Endothelial cell of umbilical vein (primary cell): ENCODE measurements at regions of chr10 and their contacts with region 1.

Region 1: GRCh38 chr10:6202684-6203330 is at the start of gene PFKFB3:
- DNase-seq: peak; percentile 93
- H3K4me3 ChIP-seq: peak within 1 kb of the TSS; percentile 73 to 87 (median 83)
- H3K27ac ChIP-seq: peak within 1 kb of the TSS; percentile 56
- H3K4me1 ChIP-seq: peaks cover 23% of the 10 kb centered on the region
- H3K27me3 ChIP-seq: no peaks in the 10 kb centered on the region
- CTCF ChIP-seq: peak; percentile 90 to 98
- POLR2A ChIP-seq: peak; percentile 98
- total RNA-seq, gene PFKFB3: 33.7 and 35.6 TPM in 2 replicates

Region 2: GRCh38 chr10:6014241-6014761 is 188.5 kb before region 1 on chr10:
- CTCF ChIA-PET with region 1: interaction called, 9 read pairs
- POLR2A ChIA-PET with region 1: no interaction called
- dilution Hi-C with region 1: no loop called
- intact Hi-C with region 1: loop called (anchors 5 kb)
- DNase-seq: peak; percentile 53
- H3K4me3 ChIP-seq: no peak overlapping the region
- H3K27ac ChIP-seq: no peak overlapping the region
- H3K4me1 ChIP-seq: no peaks in the 10 kb centered on the region
- H3K27me3 ChIP-seq: peaks cover 0 to 6% of the 10 kb centered on the region in 2 experiments
- CTCF ChIP-seq: peak; percentile 58 to 60
- POLR2A ChIP-seq: no peak

Region 3: GRCh38 chr10:6108603-6109443 is 94.0 kb before region 1 on chr10:
- CTCF ChIA-PET with region 1: interaction called, 6 read pairs
- POLR2A ChIA-PET with region 1: no interaction called
- dilution Hi-C with region 1: no loop called
- intact Hi-C with region 1: loop called (anchors 1 kb)
- DNase-seq: peak; percentile 61
- H3K4me3 ChIP-seq: no peak overlapping the region
- H3K27ac ChIP-seq: no peak overlapping the region
- H3K4me1 ChIP-seq: peaks cover under 1% of the 10 kb centered on the region
- H3K27me3 ChIP-seq: no peaks in the 10 kb centered on the region
- CTCF ChIP-seq: peak; percentile 45 to 53
- POLR2A ChIP-seq: no peak

Region 4: DNA sequence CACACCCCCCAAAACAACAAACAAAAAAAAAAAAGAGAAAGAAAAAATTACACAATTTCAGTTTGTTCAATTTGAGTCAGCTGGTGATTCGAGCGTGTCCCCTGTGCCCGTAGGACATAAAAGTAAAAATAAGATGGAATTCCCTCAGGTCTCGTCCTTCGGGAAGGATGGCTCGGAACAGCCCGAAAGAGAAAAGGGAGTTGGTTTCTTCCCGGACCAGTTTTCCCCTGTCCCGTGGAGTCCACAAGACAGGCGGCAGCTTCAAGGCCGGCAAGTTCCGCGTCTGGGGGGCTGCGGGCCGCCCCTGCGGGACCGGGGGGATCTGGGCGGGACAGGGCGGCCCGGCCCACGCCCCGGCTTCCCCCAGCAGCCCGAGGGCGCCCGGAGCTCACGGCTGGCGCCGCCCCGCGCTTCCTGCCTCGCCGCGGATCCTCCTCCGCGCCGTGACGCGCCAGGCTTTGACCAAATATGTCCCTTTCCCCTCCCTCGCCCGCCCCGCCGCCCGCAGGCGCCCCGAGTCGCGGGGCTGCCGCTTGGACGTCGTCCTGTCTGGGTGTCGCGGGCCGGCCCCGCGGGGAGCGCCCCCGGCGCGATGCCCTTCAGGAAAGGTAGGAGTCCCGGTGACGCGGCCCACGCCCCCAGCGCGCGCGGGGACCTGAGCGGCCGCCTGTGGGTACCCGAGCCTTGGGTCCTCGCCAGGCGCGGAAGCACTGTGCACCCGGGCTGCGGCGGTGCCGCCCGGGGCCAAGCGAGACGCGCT is 58.2 kb before region 1 on chr10:
- CTCF ChIA-PET with region 1: interaction called, 15 read pairs
- POLR2A ChIA-PET with region 1: interaction called, 11 read pairs
- dilution Hi-C with region 1: no loop called
- intact Hi-C with region 1: loop called (anchors 2 kb)
- DNase-seq: peak; percentile 84
- H3K4me3 ChIP-seq: peak overlapping the region; percentile 65 to 84 (median 81)
- H3K27ac ChIP-seq: peak overlapping the region; percentile 90
- H3K4me1 ChIP-seq: peaks cover 10% of the 10 kb centered on the region
- H3K27me3 ChIP-seq: no peaks in the 10 kb centered on the region
- CTCF ChIP-seq: no peak
- POLR2A ChIP-seq: peak; percentile 82

Region 5: GRCh38 chr10:6163364-6164270 is 39.2 kb before region 1 on chr10:
- CTCF ChIA-PET with region 1: interaction called, 19 read pairs
- POLR2A ChIA-PET with region 1: interaction called, 10 read pairs
- dilution Hi-C with region 1: no loop called
- intact Hi-C with region 1: loop called (anchors 1 kb)
- DNase-seq: peak; percentile 86
- H3K4me3 ChIP-seq: peak overlapping the region; percentile 59 to 70 (median 69)
- H3K27ac ChIP-seq: peak overlapping the region; percentile 79
- H3K4me1 ChIP-seq: peaks cover 20% of the 10 kb centered on the region
- H3K27me3 ChIP-seq: no peaks in the 10 kb centered on the region
- CTCF ChIP-seq: no peak
- POLR2A ChIP-seq: peak; percentile 71

Region 6: DNA sequence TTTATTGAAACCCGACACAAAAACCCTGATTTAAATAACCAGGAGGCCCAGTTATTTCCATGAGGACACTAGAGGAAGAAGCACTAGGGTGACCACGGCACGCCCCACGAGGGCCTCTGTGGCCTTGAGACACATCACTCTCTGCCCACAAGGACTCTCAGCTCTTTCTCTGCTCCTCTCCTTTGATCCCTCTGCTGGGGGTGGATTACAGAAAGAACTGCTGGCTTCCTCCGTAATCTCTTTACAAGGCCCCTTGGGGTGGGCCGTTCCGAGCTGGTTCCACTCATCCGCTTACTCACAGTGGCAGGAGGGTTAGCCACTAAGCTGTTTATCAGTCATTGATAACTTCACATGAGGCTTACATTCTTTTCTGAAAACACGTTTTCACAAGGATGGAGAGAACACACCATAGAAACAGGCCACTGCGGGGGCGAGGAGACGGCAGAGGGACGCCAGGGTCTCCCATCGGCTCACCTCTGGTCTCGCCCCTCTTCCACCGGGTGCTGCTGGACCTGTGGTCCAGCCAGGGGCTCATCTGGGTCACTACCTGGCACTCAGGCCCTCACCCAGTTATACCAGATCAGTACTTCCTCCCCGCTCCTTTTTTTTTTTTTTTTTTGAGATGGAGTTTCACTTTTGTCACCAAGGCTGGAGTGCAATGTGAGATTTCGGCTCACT is 17.6 kb before region 1 on chr10:
- CTCF ChIA-PET with region 1: interaction called, 8 read pairs
- POLR2A ChIA-PET with region 1: interaction called, 3 read pairs
- dilution Hi-C with region 1: no loop called
- intact Hi-C with region 1: loop called (anchors 1 kb)
- DNase-seq: no peak
- H3K4me3 ChIP-seq: no peak overlapping the region
- H3K27ac ChIP-seq: no peak overlapping the region
- H3K4me1 ChIP-seq: peaks cover 17% of the 10 kb centered on the region
- H3K27me3 ChIP-seq: no peaks in the 10 kb centered on the region
- CTCF ChIP-seq: no peak
- POLR2A ChIP-seq: no peak

Region 7: GRCh38 chr10:6275022-6275997 is 72.5 kb after region 1 on chr10:
- CTCF ChIA-PET with region 1: interaction called, 10 read pairs
- POLR2A ChIA-PET with region 1: interaction called, 8 read pairs
- dilution Hi-C with region 1: no loop called
- intact Hi-C with region 1: loop called (anchors 1 kb)
- DNase-seq: peak; percentile 94
- H3K4me3 ChIP-seq: peak overlapping the region in 1 of 3 experiments; percentile 20
- H3K27ac ChIP-seq: peak overlapping the region; percentile 88
- H3K4me1 ChIP-seq: peaks cover 16% of the 10 kb centered on the region
- H3K27me3 ChIP-seq: no peaks in the 10 kb centered on the region
- CTCF ChIP-seq: peak in 1 of 2 donors; percentile 3
- POLR2A ChIP-seq: peak; percentile 42